SK-N-SH (cell line): ENCODE measurements at regions of chr16 and their contacts with region 1.

Region 1: DNA sequence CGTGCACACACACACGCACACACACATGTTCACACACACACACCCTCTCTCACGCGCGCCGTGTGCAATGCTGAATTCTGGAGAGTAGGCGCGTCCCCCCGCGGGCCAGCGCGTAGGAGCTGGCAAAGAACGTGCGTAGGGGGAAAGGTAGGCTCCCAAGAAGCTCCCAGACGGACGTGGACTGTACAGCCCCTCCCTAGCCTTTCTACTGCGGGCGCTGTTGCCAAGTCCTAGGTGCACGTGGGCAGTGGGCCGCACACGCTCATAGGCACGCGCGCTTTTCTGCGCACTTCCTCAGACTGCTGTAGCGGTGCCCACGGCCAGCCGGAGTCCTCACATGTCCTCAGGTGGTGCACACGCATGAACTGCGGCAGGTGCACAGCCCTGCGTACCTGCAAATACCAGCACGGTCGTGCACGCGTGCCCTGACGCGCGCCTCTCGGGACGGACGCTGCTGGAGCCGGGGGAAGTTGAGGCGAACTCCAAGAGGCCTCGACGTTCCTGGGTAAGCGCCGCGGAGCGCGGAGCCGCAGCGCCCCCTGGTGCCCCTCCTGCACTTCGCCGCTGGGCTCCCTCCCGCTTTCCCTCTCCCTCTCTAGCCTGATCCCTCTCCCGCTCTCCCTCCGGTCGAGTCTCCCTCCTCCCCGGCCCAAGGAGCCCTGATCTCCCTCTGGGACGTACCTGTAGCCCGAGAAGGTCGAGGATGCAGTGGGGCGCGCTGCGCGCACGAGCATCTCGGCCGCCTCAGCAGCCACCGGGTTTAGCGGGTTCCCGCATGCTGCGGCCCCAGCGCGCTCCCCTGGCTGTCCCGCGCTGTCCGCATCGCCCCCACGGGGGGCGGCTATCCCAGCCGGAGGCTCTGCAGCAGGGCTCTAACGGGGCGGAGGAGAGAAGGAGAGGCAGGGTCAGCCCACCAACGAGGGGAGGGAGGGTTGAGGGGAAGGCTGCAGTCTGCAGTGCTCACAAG is 749 bp downstream of the GRIN2A start:
- DNase-seq: peak; percentile 91
- H3K4me3 ChIP-seq: no peak overlapping the region; a peak in 2 of 4 replicates
- H3K27ac ChIP-seq: no peak overlapping the region
- H3K4me1 ChIP-seq: peaks cover 0 to 5% of the 10 kb centered on the region in 2 experiments; a peak in 1 of 4 replicates
- H3K27me3 ChIP-seq: no peaks in the 10 kb centered on the region
- CTCF ChIP-seq: peak; percentile 46
- EP300 ChIP-seq: no peak
- RAD21 ChIP-seq: peak; percentile 86

Region 2: DNA sequence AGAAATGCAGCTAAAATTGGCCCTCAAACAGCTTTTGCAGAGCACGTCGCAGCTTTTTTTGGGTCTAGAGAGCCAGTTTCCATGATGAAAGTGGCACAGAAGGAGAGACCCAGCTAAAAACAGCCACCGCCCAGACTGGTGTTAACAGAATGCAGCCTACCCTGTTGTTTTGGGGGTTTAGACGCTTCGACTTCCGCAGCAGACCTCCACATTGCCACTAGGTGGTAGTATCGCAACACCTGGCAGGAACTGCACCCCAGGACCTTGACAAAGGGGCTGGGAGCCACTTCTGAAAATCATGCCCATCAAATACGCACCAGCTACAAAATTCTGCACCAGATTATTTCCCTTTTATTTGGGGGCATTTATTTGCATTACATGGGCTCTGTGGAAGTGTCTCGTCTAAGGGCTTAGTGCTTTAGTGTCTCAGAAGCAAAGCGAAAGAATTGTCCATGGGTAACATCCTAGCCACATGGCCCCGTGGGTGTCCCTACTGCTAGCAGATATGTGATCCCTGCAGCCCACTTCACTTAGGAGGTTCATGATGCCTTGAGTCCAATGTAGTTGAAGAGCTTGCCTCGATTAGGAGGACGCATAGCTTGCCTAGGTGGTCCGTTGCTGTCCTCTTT is 922.9 kb before region 1 on chr16:
- CTCF ChIA-PET with region 1: interaction called, 20 read pairs
- POLR2A ChIA-PET with region 1: no interaction called
- DNase-seq: peak; percentile 63
- H3K4me3 ChIP-seq: peak overlapping the region in 1 of 2 experiments; percentile 47; a peak in 1 of 4 replicates
- H3K27ac ChIP-seq: no peak overlapping the region
- H3K4me1 ChIP-seq: peaks cover 0 to 13% of the 10 kb centered on the region in 2 experiments; a peak in 1 of 4 replicates
- H3K27me3 ChIP-seq: no peaks in the 10 kb centered on the region
- CTCF ChIP-seq: peak; percentile 44
- EP300 ChIP-seq: no peak
- RAD21 ChIP-seq: peak; percentile 78

Region 3: DNA sequence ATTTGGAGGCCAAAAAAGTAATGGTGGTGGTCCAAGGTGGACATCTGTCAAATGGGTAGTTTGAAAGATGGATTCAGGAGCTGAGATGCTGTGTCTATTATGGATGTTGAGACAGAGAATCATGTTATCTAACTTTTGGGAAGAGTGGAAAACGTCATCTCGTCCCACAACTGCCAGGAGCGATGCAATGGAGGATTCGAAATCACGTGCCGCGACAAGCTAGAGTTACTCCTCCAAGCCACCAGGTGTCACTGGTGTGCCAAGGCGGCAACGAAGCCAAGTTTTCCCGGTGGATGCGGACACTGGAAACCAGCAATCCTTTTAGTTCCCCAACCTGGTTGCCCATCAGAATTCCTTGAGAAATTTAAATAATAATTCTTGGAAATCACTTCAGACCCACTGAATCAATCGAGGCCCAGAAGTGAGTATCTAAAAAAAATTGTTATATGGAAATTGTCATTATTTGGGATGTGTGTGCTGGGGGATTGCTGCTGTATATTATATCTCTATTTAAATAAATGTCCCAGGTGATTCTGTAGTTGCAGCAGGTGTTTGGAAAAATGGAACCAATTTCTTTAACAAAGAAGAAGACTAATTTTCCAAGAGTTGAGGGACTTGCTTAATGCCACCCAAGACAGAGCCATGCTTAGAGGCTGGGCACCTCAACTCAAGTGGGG is 883.9 kb before region 1 on chr16:
- CTCF ChIA-PET with region 1: interaction called, 25 read pairs
- POLR2A ChIA-PET with region 1: no interaction called
- DNase-seq: peak; percentile 61
- H3K4me3 ChIP-seq: no peak overlapping the region
- H3K27ac ChIP-seq: no peak overlapping the region
- H3K4me1 ChIP-seq: no peaks in the 10 kb centered on the region
- H3K27me3 ChIP-seq: no peaks in the 10 kb centered on the region
- CTCF ChIP-seq: peak; percentile 45
- EP300 ChIP-seq: no peak
- RAD21 ChIP-seq: peak; percentile 85

Region 4: DNA sequence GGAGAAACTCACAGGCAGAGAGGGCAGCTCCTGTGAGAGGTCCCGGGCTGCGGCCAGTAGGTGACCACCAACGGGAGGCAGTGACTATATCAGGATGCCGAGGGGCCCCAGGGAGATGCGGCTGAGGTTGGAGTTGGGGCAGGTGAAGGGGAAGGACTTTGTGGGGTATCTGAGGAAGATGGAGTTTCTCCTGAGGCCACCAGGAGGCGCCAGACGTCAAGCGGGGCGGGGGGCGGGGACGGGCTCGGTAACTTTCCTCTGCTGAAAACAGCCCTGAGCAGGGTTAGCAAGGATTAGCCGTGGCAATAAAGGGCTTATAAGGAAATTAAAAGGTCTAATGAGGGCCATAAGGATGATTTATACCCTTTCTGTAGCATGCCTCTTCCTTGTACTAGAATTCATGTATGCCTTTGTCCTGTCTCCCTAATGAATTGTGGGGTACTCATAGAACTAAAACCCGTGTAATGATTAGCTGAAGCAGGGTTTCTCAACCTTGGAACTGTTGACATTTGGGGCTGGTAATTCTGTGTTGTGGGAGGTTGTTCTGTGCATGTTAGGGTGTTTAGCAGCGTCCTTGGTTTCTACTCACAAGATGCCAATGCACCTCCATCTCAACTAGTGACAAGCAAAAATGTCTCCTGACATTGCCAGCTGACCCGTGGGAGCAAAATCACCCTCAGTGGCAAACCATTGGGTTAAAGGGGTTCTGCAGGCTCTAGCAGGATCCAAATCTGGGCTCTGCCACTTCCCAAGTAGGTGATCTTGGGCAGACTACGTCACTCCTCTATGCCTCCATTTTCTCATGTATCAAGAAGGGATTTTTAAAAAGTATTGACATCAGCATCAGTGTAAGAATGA is 75.5 kb after region 1 on chr16:
- CTCF ChIA-PET with region 1: no interaction called
- POLR2A ChIA-PET with region 1: no interaction called
- DNase-seq: peak; percentile 86
- H3K4me3 ChIP-seq: peak overlapping the region in 1 of 2 experiments; percentile 19; a peak in 1 of 4 replicates
- H3K27ac ChIP-seq: no peak overlapping the region
- H3K4me1 ChIP-seq: no peaks in the 10 kb centered on the region; a peak in 1 of 4 replicates
- H3K27me3 ChIP-seq: no peaks in the 10 kb centered on the region
- CTCF ChIP-seq: peak; percentile 48
- EP300 ChIP-seq: no peak
- RAD21 ChIP-seq: peak; percentile 65